OCI-LY7 (cell line): ENCODE measurements at regions of chr16 and their contacts with region 1.

Region 1: GRCh38 chr16:27286451-27286850 is 17.9 kb upstream of the NSMCE1 start:
- DNase-seq: no peak
- H3K4me3 ChIP-seq: no peak overlapping the region
- H3K27ac ChIP-seq: no peak overlapping the region
- H3K4me1 ChIP-seq: peaks cover 28% of the 10 kb centered on the region
- CTCF ChIP-seq: no peak

Region 2: DNA sequence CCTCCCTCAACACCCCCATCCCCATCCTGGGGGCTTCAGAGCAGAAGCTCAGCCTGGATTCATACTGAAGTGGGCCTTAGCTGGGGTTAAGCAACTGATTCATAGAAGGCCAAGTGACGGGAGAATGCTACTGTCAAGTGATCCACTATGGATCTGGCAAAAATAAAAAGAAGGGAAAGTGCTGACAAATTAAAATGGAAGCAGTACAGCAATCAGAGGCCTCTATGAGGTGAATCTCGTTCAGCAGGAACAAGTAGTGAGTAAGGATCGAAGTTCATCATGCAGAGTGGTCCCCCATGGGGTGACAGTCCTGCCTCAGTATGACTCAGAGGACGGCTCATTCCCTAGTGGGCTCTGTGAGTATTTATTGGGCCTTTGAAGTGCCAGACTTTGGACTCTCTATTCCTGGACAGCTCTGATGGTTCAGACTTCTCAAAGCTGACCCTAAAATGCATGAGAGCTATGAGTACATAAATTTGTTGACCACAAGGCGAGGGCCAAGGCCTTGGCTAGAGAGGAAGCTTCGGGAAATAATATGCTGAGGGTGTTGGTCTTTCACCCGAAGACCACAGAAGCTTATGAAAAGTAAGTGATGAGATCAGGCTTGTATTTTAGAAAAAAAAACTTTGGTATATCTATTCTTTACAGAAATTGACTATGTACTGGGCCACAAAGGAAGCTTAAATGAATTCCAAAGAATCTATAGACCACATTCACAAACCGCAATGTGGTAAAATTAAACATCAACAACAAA is 12.6 kb before region 1 on chr16:
- CTCF ChIA-PET with region 1: no interaction called
- POLR2A ChIA-PET with region 1: interaction called, 18 read pairs
- intact Hi-C with region 1: no loop called
- DNase-seq: no peak
- H3K4me3 ChIP-seq: peak overlapping the region; percentile 16
- H3K27ac ChIP-seq: peak overlapping the region; percentile 89
- H3K4me1 ChIP-seq: peaks cover 68% of the 10 kb centered on the region
- CTCF ChIP-seq: peak; percentile 38; the same call in 1 of the 2 replicates

Region 3: GRCh38 chr16:27301236-27301861 is 14.9 kb after region 1 on chr16:
- CTCF ChIA-PET with region 1: no interaction called
- POLR2A ChIA-PET with region 1: interaction called, 15 read pairs
- intact Hi-C with region 1: no loop called
- DNase-seq: no peak
- H3K4me3 ChIP-seq: peak overlapping the region; percentile 0
- H3K27ac ChIP-seq: peak overlapping the region; percentile 86
- H3K4me1 ChIP-seq: peaks cover 82% of the 10 kb centered on the region
- CTCF ChIP-seq: no peak

Region 4: GRCh38 chr16:27529962-27530361 is 243.5 kb after region 1 on chr16:
- CTCF ChIA-PET with region 1: no interaction called
- POLR2A ChIA-PET with region 1: no interaction called
- intact Hi-C with region 1: no loop called
- DNase-seq: no peak
- H3K4me3 ChIP-seq: no peak overlapping the region
- H3K27ac ChIP-seq: no peak overlapping the region
- H3K4me1 ChIP-seq: no peaks in the 10 kb centered on the region
- CTCF ChIP-seq: no peak